K562 (cell line): ENCODE measurements at regions of chr2 and their contacts with region 1.

Region 1: DNA sequence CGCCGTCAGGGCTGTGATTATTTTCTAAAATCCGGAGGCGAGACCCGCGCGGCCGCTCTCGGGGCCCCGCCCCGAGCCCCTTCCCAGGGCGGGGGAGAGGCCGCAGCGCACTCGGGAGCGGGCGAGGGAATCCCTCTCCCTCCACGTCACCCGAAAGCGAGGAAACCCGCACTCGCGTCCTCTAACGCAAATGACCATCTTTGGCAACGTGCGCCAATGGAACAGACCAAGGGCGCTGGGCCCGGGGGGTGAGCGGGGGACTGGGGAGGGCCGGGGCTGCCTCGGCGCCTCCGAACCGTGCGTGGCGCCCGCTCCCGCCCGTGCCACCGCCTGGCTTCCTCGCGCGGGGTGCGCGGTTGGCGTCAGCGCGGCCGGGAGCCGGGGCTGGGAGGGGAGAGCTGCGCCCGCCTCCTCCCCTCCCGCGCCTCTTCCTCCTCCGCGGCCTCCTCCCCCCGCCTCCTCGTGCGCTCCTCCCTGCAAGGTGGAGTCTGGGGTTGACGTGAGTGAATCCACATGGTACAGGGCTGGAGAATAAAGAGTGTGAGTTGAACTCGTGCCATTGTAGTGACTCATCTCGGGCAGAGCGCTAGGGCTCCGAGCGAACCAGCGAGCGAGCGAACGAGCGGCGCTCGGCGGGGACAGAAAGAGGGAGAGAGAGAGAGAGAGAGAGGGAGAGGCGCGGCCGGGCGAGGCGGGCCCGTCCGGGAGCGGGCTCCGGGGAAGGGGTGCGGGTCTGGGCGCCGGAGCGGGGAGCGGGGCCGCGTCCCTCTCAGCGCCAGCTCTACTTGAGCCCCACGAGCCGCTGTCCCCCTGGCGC is at the start of gene FOSL2:
- DNase-seq: peak; percentile 92 to 95 (median 93)
- ATAC-seq: peak; percentile 89
- H3K4me3 ChIP-seq: peak within 1 kb of the TSS; percentile 65
- H3K27ac ChIP-seq: peak within 1 kb of the TSS; percentile 80; the same call in 2 of the 3 replicates
- H3K4me1 ChIP-seq: peaks cover 9 to 36% of the 10 kb centered on the region in 2 experiments; a peak in 4 of 5 replicates
- H3K27me3 ChIP-seq: peaks cover 0 to 17% of the 10 kb centered on the region in 2 experiments; a peak in 2 of 5 replicates
- CTCF ChIP-seq: 0 out of 6 replicates have a peak, but pooled peaks of 1 of the 3 experiments have one; percentile 2
- EP300 ChIP-seq: peak; percentile 4; the same call in 1 of the 2 replicates
- POLR2A ChIP-seq: peak; percentile 73
- RAD21 ChIP-seq: peak; percentile 4 to 35; a peak in 2 of 4 replicates
- polyA plus RNA-seq, gene FOSL2: 0.04 to 0.07 TPM

Region 2: GRCh38 chr2:27723372-27724144 is 668.9 kb before region 1 on chr2:
- CTCF ChIA-PET with region 1: no interaction called
- POLR2A ChIA-PET with region 1: interaction called, 3 read pairs
- in situ Hi-C with region 1: no loop called
- intact Hi-C with region 1: loop called (anchors 10 kb)
- DNase-seq: peak; percentile 65 to 67 (median 66)
- ATAC-seq: peak; percentile 92
- H3K4me3 ChIP-seq: no peak overlapping the region
- H3K27ac ChIP-seq: no peak overlapping the region
- H3K4me1 ChIP-seq: peaks cover 0 to 4% of the 10 kb centered on the region in 2 experiments; a peak in 2 of 5 replicates
- H3K27me3 ChIP-seq: peaks cover 5 to 11% of the 10 kb centered on the region in 2 experiments; a peak in 2 of 5 replicates
- CTCF ChIP-seq: peak; percentile 71 to 82 (median 80)
- EP300 ChIP-seq: no peak
- POLR2A ChIP-seq: no peak
- RAD21 ChIP-seq: peak; percentile 48 to 76

Region 3: DNA sequence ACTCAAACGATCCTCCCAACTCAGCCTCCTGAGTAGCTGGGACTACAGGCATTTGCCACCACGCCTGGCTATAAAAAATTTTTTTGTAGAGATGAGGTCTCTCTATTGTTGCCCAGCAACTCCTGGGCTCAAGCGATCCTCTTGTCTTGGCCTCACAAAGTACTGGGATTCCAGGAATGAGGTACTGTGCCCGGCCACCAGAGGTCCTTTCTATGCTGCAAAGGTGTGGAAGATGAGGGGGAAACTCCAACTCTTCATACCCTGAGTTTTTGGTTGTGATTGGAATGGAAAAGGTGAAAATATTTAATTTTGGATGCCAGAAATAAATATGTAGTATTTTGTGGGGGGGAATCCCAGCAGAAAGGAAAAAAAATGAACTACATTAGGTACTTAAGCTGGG is 585.0 kb before region 1 on chr2:
- CTCF ChIA-PET with region 1: interaction called, 3 read pairs
- POLR2A ChIA-PET with region 1: no interaction called
- in situ Hi-C with region 1: no loop called
- intact Hi-C with region 1: loop called (anchors 2 kb)
- DNase-seq: peak in 2 of 4 experiments; percentile 16 to 31
- ATAC-seq: peak; percentile 83
- H3K4me3 ChIP-seq: no peak overlapping the region
- H3K27ac ChIP-seq: no peak overlapping the region
- H3K4me1 ChIP-seq: no peaks in the 10 kb centered on the region
- H3K27me3 ChIP-seq: peaks cover 10 to 24% of the 10 kb centered on the region in 2 experiments
- CTCF ChIP-seq: peak; percentile 55 to 62 (median 60)
- EP300 ChIP-seq: no peak
- POLR2A ChIP-seq: no peak
- RAD21 ChIP-seq: peak; percentile 55 to 79

Region 4: DNA sequence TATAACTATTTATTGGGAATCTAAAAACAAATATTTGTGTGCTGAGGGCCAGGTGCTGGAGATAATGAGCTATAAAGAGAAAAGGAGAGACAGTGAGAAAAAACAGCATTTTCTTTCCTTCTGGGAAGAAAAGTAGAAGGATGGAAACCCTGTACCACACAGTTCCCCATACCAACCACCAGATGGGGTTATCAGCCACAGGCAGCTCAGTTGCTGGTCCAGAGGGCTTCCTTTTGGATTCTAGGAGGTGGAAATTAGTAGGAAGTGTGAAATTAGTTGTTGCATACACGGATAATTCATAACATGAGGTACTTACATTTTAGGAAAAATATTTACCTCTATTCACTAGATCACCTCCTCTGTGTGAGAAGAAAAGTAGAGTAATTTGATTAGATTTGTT is 236.9 kb before region 1 on chr2:
- CTCF ChIA-PET with region 1: interaction called, 9 read pairs
- POLR2A ChIA-PET with region 1: no interaction called
- in situ Hi-C with region 1: no loop called
- intact Hi-C with region 1: loop called (anchors 5 kb)
- DNase-seq: peak; percentile 55 to 75 (median 68)
- ATAC-seq: no peak
- H3K4me3 ChIP-seq: no peak overlapping the region
- H3K27ac ChIP-seq: no peak overlapping the region
- H3K4me1 ChIP-seq: no peaks in the 10 kb centered on the region
- H3K27me3 ChIP-seq: no peaks in the 10 kb centered on the region
- CTCF ChIP-seq: peak; percentile 77 to 83 (median 79)
- EP300 ChIP-seq: no peak
- POLR2A ChIP-seq: no peak
- RAD21 ChIP-seq: peak; percentile 52 to 89

Region 5: GRCh38 chr2:28342081-28342967 is 50.2 kb before region 1 on chr2:
- CTCF ChIA-PET with region 1: no interaction called
- POLR2A ChIA-PET with region 1: no interaction called
- in situ Hi-C with region 1: no loop called
- intact Hi-C with region 1: loop called (anchors 2 kb)
- DNase-seq: peak; percentile 28 to 54 (median 46)
- ATAC-seq: peak; percentile 36
- H3K4me3 ChIP-seq: no peak overlapping the region
- H3K27ac ChIP-seq: no peak overlapping the region
- H3K4me1 ChIP-seq: peaks cover 18 to 24% of the 10 kb centered on the region in 2 experiments
- H3K27me3 ChIP-seq: no peaks in the 10 kb centered on the region
- CTCF ChIP-seq: no peak
- EP300 ChIP-seq: peak; percentile 34; the same call in 1 of the 2 replicates
- POLR2A ChIP-seq: no peak
- RAD21 ChIP-seq: no peak

Region 6: GRCh38 chr2:28452534-28453081 is 60.1 kb after region 1 on chr2:
- CTCF ChIA-PET with region 1: interaction called, 3 read pairs
- POLR2A ChIA-PET with region 1: no interaction called
- in situ Hi-C with region 1: no loop called
- intact Hi-C with region 1: loop called (anchors 2 kb)
- DNase-seq: peak; percentile 73 to 83 (median 78)
- ATAC-seq: peak; percentile 95
- H3K4me3 ChIP-seq: no peak overlapping the region
- H3K27ac ChIP-seq: no peak overlapping the region
- H3K4me1 ChIP-seq: peaks cover 10% of the 10 kb centered on the region in 2 experiments; a peak in 4 of 5 replicates
- H3K27me3 ChIP-seq: peaks cover 0 to 23% of the 10 kb centered on the region in 2 experiments; a peak in 2 of 5 replicates
- CTCF ChIP-seq: peak; percentile 88 to 95 (median 93)
- EP300 ChIP-seq: no peak
- POLR2A ChIP-seq: no peak
- RAD21 ChIP-seq: peak; percentile 86 to 92